ENCODE measurements at regions of chrX and their contacts with region 1.

Region 1: GRCh38 chrX:99033226-99033901 is 1376.7 kb downstream of the PCDH19 start:
- DNase-seq: no peak
- H3K4me3 ChIP-seq: no peak overlapping the region
- CTCF ChIP-seq: no peak
- POLR2A ChIP-seq: no peak

Region 2: GRCh38 chrX:98548519-98548918 is 484.8 kb before region 1 on chrX:
- intact Hi-C with region 1: loop called (anchors 5 kb)
- DNase-seq: no peak
- H3K4me3 ChIP-seq: no peak overlapping the region
- CTCF ChIP-seq: no peak
- POLR2A ChIP-seq: no peak

Region 3: DNA sequence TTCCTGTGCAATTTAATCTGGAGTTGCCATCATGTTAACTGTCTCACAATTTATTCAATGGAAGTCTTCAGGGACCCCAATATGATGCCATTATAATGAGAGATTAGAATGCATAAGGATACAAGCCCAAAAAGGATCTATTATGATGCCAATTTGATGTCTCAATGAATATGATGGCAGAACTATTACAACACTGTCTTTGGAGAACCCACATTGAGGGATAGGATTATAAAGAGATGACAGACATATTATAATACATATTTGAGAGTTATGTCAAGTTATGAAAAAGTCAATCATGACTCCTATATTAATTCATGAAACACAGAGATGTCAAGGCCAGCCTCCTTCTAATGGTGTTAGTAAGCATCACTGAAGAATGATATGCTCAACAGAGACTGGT is 18.3 kb after region 1 on chrX:
- intact Hi-C with region 1: no loop called
- DNase-seq: no peak
- H3K4me3 ChIP-seq: no peak overlapping the region
- CTCF ChIP-seq: no peak
- POLR2A ChIP-seq: no peak

Measured in lower leg skin (tissue), 4 donors.